ENCODE measurements at regions of chrX and their contacts with region 1.

Region 1: GRCh38 chrX:1453951-1454785 is 1.5 kb upstream of the ASMTL start:
- DNase-seq: peak; percentile 53 to 73
- H3K4me3 ChIP-seq: no peak overlapping the region
- H3K27ac ChIP-seq: no peak overlapping the region
- H3K4me1 ChIP-seq: no peaks in the 10 kb centered on the region
- H3K27me3 ChIP-seq: peaks cover 20% of the 10 kb centered on the region
- CTCF ChIP-seq: peak; percentile 92

Region 2: GRCh38 chrX:1205680-1206611 is 248.2 kb before region 1 on chrX:
- CTCF ChIA-PET with region 1: no interaction called
- POLR2A ChIA-PET with region 1: no interaction called
- intact Hi-C with region 1: loop called (anchors 5 kb)
- DNase-seq: peak; percentile 47 to 93
- H3K4me3 ChIP-seq: peak overlapping the region; percentile 42; the same call in 1 of the 2 replicates
- H3K27ac ChIP-seq: peak overlapping the region; percentile 35; the same call in 1 of the 2 replicates
- H3K4me1 ChIP-seq: peaks cover 29% of the 10 kb centered on the region
- H3K27me3 ChIP-seq: no peaks in the 10 kb centered on the region
- CTCF ChIP-seq: no peak

Region 3: DNA sequence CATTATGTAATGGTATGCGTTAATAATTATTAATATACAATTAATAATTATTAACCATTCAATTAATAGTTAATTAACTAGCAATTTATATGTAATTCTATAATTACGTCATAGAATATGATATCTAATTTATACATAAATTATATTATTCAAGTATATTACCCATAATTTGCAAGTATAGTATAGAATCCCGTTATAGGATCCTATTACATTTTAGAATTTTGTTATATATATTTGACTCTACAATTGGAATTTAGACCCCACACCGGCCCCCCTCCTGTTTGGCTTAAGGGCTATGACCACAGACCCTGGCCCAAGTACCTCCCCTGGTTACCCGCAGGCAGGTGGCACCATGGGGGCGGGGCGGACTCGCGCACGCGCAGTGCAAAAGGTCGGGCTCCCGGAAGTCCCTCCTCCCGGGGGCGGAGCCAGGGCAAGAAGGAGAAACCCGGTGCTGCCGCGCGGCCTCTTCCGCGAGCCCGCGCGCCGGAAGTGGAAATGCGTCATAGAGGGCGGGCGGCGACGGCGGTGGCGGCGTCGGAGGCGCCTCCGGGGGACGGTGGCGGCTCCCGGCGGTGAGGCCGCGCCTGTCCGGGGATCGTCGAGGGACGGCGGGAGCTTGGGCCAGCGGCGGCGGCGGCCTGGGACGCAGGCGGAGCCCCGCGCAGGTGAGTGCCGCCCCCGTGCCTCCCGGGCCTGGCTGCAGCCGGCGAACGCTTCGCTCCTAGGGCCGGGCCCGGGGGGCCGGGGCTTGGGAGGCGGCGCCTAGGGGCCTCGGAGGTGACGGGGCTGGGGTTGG is 137.1 kb after region 1 on chrX and contains the start of gene AKAP17A:
- CTCF ChIA-PET with region 1: no interaction called
- POLR2A ChIA-PET with region 1: no interaction called
- intact Hi-C with region 1: loop called (anchors 5 kb)
- DNase-seq: peak; percentile 82 to 95
- H3K4me3 ChIP-seq: peak within 1 kb of the TSS; percentile 95
- H3K27ac ChIP-seq: peak within 1 kb of the TSS; percentile 44
- H3K4me1 ChIP-seq: peaks cover 9% of the 10 kb centered on the region; the same call in 1 of the 2 replicates
- H3K27me3 ChIP-seq: no peaks in the 10 kb centered on the region
- CTCF ChIP-seq: no peak
- total RNA-seq, gene AKAP17A: 28.3 and 29.2 TPM in 2 replicates

Region 4: DNA sequence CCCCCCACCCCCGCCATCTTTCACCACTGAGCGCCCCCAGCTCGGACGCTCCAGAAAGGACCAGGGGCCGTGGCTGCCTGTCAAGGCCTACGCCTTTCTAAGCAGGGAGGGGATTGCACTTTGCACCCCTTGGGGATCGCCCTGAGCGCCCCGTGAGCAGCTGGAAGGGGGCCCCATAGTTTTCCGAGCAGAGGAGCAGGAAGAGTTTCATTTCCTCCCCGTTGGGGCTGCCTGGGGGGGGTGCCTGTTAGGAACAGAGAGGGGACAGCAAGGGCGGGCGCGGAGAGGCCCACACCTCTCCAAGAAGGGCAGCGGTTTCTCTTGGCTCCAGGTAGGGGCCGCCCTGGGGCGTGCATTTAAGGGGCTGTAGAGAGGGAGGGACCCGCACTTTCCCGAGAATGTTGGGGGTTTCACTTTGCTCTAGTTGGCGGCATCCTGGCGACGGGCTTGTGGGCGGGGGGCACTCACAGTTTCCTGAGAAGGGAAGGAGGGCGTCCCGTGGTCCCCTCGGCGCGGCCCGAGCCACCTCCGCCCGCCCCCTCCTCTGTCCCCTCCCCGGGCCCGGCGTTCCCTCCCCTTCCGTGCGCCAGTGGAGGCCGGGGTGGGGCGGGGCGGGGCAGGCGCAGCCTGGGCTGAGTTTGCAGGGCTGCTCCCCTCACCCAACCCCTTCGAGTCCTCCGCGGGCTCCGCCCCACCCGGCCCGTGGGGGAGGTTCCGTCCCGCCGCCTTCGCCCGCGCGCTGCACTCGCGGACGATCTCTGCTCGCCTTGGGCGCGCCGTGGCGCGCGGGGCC is 1154.7 kb after region 1 on chrX:
- CTCF ChIA-PET with region 1: no interaction called
- POLR2A ChIA-PET with region 1: no interaction called
- intact Hi-C with region 1: loop called (anchors 10 kb)
- DNase-seq: peak; percentile 67 to 82
- H3K4me3 ChIP-seq: peak overlapping the region; percentile 78
- H3K27ac ChIP-seq: no peak overlapping the region
- H3K4me1 ChIP-seq: peaks cover 11% of the 10 kb centered on the region
- H3K27me3 ChIP-seq: no peaks in the 10 kb centered on the region
- CTCF ChIP-seq: no peak; the same call in 1 of the 2 replicates

Region 5: GRCh38 chrX:2690856-2691542 is 1236.8 kb after region 1 on chrX and contains the start of gene CD99:
- CTCF ChIA-PET with region 1: no interaction called
- POLR2A ChIA-PET with region 1: no interaction called
- intact Hi-C with region 1: loop called (anchors 10 kb)
- DNase-seq: peak; percentile 61 to 78
- H3K4me3 ChIP-seq: peak within 1 kb of the TSS; percentile 86
- H3K27ac ChIP-seq: peak within 1 kb of the TSS; percentile 40; the same call in 1 of the 2 replicates
- H3K4me1 ChIP-seq: peaks cover 21% of the 10 kb centered on the region
- H3K27me3 ChIP-seq: no peaks in the 10 kb centered on the region
- CTCF ChIP-seq: no peak
- total RNA-seq, gene CD99: 159 and 203 TPM in 2 replicates